Activated CD4-positive, alpha-beta T cell treated with anti-CD3 and anti-CD28 coated beads for 36 hours (primary cell): ENCODE measurements at regions of chr16 and their contacts with region 1.

Region 1: DNA sequence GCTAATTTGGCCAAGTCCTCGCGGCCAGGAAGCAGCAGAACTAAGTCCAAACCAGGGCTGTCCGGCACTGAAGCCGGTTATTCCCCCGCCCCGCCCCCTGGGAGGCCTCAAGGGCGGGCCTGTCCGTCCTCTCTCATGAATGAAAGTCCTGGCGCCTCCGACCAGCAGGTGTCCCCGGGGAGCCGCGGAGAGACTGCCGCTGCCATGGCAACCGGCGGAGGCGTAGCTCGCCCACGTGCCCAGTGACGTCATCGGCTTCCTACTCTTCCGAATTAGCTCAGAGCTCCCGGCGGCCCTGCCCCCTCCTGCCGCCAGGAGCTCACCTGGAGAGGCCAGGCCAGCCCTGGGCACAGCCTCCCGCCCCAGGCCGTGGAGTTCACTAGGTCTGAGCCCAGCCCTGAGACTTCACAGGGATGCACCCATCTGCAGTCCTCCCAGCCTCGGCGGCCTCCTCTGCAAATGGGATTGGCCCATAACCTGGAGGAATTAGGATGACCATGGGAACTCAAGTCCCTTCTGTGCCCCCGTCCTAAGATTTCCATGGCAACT is 1.3 kb downstream of the SPATA2L start:
- DNase-seq: peak; percentile 99
- ATAC-seq: peak; percentile 21
- H3K4me3 Mint-ChIP-seq: peak overlapping the region; percentile 71
- H3K27ac Mint-ChIP-seq: peak overlapping the region; percentile 25
- H3K4me1 Mint-ChIP-seq: peaks cover 13% of the 10 kb centered on the region
- H3K27me3 Mint-ChIP-seq: no peaks in the 10 kb centered on the region

Region 2: GRCh38 chr16:89246903-89247733 is 453.1 kb before region 1 on chr16:
- CTCF ChIA-PET with region 1: no interaction called
- POLR2A ChIA-PET with region 1: no interaction called
- intact Hi-C with region 1: loop called in 1 of 2 experiments (anchors 2 kb)
- DNase-seq: peak; percentile 99
- ATAC-seq: peak; percentile 93
- H3K4me3 Mint-ChIP-seq: peak overlapping the region; percentile 71
- H3K27ac Mint-ChIP-seq: no peak overlapping the region
- H3K4me1 Mint-ChIP-seq: peaks cover 15% of the 10 kb centered on the region
- H3K27me3 Mint-ChIP-seq: no peaks in the 10 kb centered on the region

Region 3: DNA sequence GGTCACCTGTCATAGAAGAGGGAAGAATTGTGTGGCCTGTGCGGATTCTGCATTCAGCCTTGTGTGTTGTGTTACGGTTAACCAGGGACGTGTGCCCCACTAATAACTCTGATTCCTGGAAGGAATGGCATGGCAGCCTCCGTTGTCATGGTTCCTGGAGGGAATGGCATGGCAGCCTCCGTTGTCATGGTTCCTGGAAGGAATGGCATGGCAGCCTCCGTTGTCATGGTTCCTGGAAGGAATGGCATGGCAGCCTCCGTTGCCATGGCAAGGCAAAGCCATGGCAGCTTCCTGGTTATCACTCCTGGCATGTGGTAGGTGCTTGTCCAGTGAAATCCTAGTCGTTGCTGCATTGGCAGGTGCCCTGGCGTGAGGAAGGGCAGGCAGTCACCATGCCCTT is 183.0 kb before region 1 on chr16:
- CTCF ChIA-PET with region 1: no interaction called
- POLR2A ChIA-PET with region 1: no interaction called
- intact Hi-C with region 1: no loop called
- DNase-seq: no peak
- ATAC-seq: no peak
- H3K4me3 Mint-ChIP-seq: no peak overlapping the region
- H3K27ac Mint-ChIP-seq: no peak overlapping the region
- H3K4me1 Mint-ChIP-seq: no peaks in the 10 kb centered on the region
- H3K27me3 Mint-ChIP-seq: no peaks in the 10 kb centered on the region

Region 4: GRCh38 chr16:89686520-89687091 is 13.6 kb before region 1 on chr16 and contains the start of gene CDK10:
- CTCF ChIA-PET with region 1: interaction called, 13 read pairs
- POLR2A ChIA-PET with region 1: interaction called, 4 read pairs
- intact Hi-C with region 1: loop called (anchors 1 to 2 kb)
- DNase-seq: peak; percentile 92
- ATAC-seq: peak; percentile 90
- H3K4me3 Mint-ChIP-seq: peak within 1 kb of the TSS; percentile 86
- H3K27ac Mint-ChIP-seq: peak within 1 kb of the TSS; percentile 88
- H3K4me1 Mint-ChIP-seq: peaks cover 14% of the 10 kb centered on the region
- H3K27me3 Mint-ChIP-seq: no peaks in the 10 kb centered on the region
- total RNA-seq, gene CDK10: 78.1 to 89.8 TPM

Region 5: DNA sequence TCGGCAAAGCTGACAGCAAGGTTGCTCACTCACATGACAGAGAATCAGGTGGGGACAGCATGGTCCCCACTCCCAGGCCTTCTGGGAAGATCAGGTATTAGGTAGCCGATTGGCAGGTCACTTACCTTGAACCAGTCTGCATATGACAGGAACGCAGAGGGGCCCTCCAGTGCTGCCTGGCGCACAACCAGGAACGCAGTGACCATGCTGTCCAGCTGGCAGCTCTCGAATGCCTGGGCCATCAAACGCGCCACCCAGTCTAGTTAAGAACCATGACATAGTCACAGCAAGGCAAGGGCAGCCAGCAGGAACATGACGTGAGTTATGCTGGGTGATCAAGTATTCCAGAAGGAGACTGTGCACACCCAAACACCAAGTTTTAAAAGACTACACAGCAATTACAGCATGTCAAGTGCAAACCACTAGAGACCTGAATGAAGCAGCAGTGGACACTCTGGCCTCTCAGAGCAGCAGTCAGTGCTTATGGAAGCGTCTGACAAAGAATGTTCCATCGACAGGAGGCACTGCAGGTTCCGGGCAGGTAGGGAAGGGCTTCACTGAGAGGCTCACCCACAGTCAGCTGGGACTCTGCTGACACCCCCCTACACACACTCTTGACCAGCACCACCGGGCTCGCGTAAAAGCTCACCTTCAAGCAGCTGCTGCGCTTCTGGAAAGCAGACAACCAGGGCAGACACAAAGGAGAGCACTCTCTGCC is 91.3 kb after region 1 on chr16:
- CTCF ChIA-PET with region 1: interaction called, 31 read pairs
- POLR2A ChIA-PET with region 1: no interaction called
- intact Hi-C with region 1: loop called in 1 of 2 experiments (anchors 1 kb)
- DNase-seq: no peak
- ATAC-seq: no peak
- H3K4me3 Mint-ChIP-seq: no peak overlapping the region
- H3K27ac Mint-ChIP-seq: no peak overlapping the region
- H3K4me1 Mint-ChIP-seq: peaks cover 6% of the 10 kb centered on the region
- H3K27me3 Mint-ChIP-seq: no peaks in the 10 kb centered on the region

Region 6: GRCh38 chr16:89860747-89861304 is 160.7 kb after region 1 on chr16:
- CTCF ChIA-PET with region 1: interaction called, 25 read pairs
- POLR2A ChIA-PET with region 1: no interaction called
- intact Hi-C with region 1: loop called in 1 of 2 experiments (anchors 1 kb)
- DNase-seq: peak; percentile 84
- ATAC-seq: peak; percentile 81
- H3K4me3 Mint-ChIP-seq: no peak overlapping the region
- H3K27ac Mint-ChIP-seq: no peak overlapping the region
- H3K4me1 Mint-ChIP-seq: peaks cover 28% of the 10 kb centered on the region
- H3K27me3 Mint-ChIP-seq: no peaks in the 10 kb centered on the region

Region 7: GRCh38 chr16:90022209-90023064 is 322.3 kb after region 1 on chr16:
- CTCF ChIA-PET with region 1: no interaction called
- POLR2A ChIA-PET with region 1: no interaction called
- intact Hi-C with region 1: loop called in 1 of 2 experiments (anchors 5 kb)
- DNase-seq: peak; percentile 92
- ATAC-seq: peak; percentile 86
- H3K4me3 Mint-ChIP-seq: peak overlapping the region; percentile 66
- H3K27ac Mint-ChIP-seq: peak overlapping the region; percentile 77
- H3K4me1 Mint-ChIP-seq: peaks cover 21% of the 10 kb centered on the region
- H3K27me3 Mint-ChIP-seq: peaks cover 5% of the 10 kb centered on the region